ENCODE measurements at regions of chr2 and their contacts with region 1.

Region 1: GRCh38 chr2:101252408-101253012 is at the start of gene CNOT11:
- DNase-seq: peak; percentile 98
- ATAC-seq: peak; percentile 95
- H3K4me3 ChIP-seq: peak within 1 kb of the TSS; percentile 84
- H3K27ac ChIP-seq: peak within 1 kb of the TSS; percentile 87
- H3K4me1 ChIP-seq: peaks cover 12% of the 10 kb centered on the region
- H3K27me3 ChIP-seq: no peaks in the 10 kb centered on the region
- CTCF ChIP-seq: no peak
- POLR2A ChIP-seq: peak; percentile 78; the same call in 1 of the 2 replicates
- RAD21 ChIP-seq: no peak
- total RNA-seq, gene CNOT11: 33.6 and 36.4 TPM in 2 replicates

Region 2: GRCh38 chr2:101308432-101309210 is 56.1 kb after region 1 on chr2 and contains the start of gene RNF149:
- CTCF ChIA-PET with region 1: no interaction called
- POLR2A ChIA-PET with region 1: interaction called, 12 read pairs
- dilution Hi-C with region 1: no loop called
- in situ Hi-C with region 1: no loop called
- intact Hi-C with region 1: no loop called
- DNase-seq: peak; percentile 86
- ATAC-seq: peak; percentile 94
- H3K4me3 ChIP-seq: peak within 1 kb of the TSS; percentile 86
- H3K27ac ChIP-seq: peak within 1 kb of the TSS; percentile 78
- H3K4me1 ChIP-seq: peaks cover 12% of the 10 kb centered on the region
- H3K27me3 ChIP-seq: no peaks in the 10 kb centered on the region
- CTCF ChIP-seq: no peak
- POLR2A ChIP-seq: peak; percentile 62; the same call in 1 of the 2 replicates
- RAD21 ChIP-seq: no peak
- total RNA-seq, gene RNF149: 18.6 and 26.4 TPM in 2 replicates